ENCODE measurements at regions of chr6 and their contacts with region 1.

Region 1: DNA sequence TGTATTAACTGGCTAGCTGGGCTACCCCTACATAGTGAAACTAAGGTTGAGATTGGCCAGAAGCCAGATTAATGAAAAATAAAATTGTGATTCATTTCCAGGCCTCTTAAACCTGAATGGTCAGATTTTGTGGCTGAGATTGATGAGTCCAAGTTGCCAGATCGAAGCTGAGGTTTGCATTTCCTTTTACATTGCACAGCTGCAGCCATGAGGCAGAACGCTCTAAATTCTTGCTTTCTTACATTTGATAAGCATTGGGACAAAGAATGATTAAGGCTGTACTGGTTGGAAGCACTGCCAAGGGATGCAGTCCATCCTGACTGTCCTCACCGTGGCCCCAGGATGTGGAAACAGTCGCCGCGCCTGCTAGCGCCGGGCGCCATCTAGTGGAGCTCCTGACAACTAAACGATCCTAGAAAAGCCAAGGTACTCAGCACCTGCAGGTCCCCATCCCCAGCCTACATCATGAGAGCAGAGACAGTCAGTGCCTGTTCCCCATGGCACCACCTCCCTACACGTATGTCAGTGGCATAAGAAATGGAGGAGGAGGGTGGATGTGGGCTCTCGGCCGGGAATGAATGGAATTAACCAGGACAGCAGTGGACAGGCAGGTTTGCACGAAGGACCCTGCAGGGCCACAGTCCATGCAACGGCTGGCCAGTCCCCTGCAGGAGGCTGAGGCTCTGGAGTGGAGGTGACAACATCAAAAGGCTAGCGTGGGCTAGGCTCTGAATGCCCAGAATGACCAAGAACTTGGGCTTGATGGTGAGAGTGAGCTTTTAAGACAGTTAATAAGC is 19.0 kb downstream of the PXDC1 start:
- DNase-seq: peak; percentile 77
- H3K4me3 ChIP-seq: no peak overlapping the region
- H3K27ac ChIP-seq: no peak overlapping the region
- H3K4me1 ChIP-seq: peaks cover 0 to 3% (median 0%) of the 10 kb centered on the region in 4 donors
- H3K27me3 ChIP-seq: no peaks in the 10 kb centered on the region
- CTCF ChIP-seq: peak; percentile 84 to 86 (median 85)
- EP300 ChIP-seq: no peak
- POLR2A ChIP-seq: no peak

Region 2: GRCh38 chr6:3306848-3307247 is 425.7 kb before region 1 on chr6:
- in situ Hi-C with region 1: no loop called
- intact Hi-C with region 1: no loop called
- DNase-seq: peak; percentile 4
- H3K4me3 ChIP-seq: no peak overlapping the region
- H3K27ac ChIP-seq: no peak overlapping the region
- H3K4me1 ChIP-seq: no peaks in the 10 kb centered on the region
- H3K27me3 ChIP-seq: no peaks in the 10 kb centered on the region
- CTCF ChIP-seq: no peak
- EP300 ChIP-seq: no peak
- POLR2A ChIP-seq: no peak

Region 3: DNA sequence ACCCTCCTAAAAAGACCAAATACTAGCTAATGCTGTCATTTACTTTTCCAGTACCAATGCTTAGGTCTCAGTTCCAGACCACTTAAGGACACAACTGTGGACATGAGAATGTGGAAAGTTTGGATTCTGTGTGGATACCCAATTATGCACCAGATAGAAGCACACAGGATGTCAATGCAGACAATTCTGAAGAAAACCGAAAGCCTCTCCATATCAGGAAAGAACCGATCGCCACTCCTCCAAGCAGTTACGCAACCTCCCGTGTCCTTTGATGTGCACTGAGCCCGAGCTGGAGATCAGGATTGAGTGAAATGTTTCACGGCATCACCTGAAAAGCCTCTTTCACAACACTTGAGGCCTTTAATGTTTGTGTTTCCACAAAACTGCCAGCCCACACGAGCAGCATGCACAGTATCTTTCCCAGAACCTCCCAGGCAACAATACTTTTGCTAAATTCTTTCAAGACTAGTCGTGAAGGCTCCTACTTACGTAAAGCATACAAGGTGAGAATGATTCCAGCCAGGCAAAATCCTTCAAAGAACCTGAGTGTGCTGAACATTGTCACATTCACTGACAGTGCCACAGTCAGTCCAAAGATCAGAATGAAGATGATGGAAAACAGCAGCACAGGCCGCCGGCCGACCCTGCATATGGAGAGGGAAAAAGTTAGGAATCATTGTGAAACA is 322.7 kb before region 1 on chr6:
- in situ Hi-C with region 1: no loop called
- intact Hi-C with region 1: loop called (anchors 2 kb)
- DNase-seq: peak; percentile 83
- H3K4me3 ChIP-seq: peak overlapping the region in 2 of 4 donors; percentile 14 to 18
- H3K27ac ChIP-seq: peak overlapping the region; percentile 82 to 85 (median 84)
- H3K4me1 ChIP-seq: peaks cover 15 to 67% (median 34%) of the 10 kb centered on the region in 4 donors
- H3K27me3 ChIP-seq: no peaks in the 10 kb centered on the region
- CTCF ChIP-seq: no peak
- EP300 ChIP-seq: no peak
- POLR2A ChIP-seq: no peak